A549 (cell line): ENCODE measurements at regions of chr17 and their contacts with region 1.

Region 1: DNA sequence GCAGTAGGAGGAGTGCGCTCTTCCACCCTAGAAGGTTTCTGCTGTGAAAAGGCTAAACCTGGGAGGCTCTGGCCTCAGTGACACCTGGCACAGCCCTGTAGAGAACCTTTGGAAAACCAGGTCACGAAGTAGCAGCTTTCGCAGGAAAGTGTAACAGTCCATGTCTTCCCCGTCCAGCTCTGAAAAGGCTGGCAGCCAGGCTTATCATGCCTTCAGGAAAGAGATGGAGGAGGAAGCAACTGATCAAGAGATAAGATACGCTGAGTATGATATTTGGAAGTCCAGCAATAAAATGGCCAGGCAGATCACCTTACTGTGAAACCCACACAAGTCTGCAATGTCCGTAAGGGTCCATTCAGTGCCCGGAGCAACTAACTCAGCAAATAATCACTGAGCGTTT is 22.3 kb downstream of the TUBD1 start:
- DNase-seq: no peak
- ATAC-seq: no peak
- H3K4me3 ChIP-seq: no peak overlapping the region
- H3K27ac ChIP-seq: no peak overlapping the region
- H3K4me1 ChIP-seq: peaks cover 5% of the 10 kb centered on the region; the same call in 2 of the 3 replicates
- CTCF ChIP-seq: no peak
- EP300 ChIP-seq: no peak
- POLR2A ChIP-seq: no peak
- RAD21 ChIP-seq: no peak

Region 2: DNA sequence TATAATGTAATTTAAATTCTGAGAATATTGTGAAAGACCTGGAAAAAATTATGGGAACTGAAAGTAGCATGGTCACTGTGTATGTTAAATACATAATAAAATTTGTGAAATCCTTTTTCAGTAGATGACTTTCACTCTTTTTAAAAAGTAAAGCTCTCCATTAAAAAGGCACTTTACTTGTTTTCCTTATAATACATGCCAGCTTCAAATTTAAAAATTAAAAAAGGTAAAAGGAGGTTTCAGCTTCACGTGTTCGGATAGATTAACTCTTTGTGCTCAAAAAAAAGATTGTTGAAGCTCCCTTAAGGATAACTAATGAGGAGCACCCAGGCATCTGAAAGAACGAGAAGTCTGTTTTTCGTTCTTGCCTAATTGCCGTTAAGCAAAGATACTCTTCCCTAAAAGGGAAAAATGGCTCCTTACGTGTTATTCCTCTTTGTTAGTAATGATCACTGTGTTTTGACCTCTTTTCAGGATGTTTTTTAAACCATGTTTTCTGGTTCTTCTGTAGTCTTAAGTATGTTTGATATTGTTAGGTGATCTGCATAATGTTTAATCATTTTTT is 65.5 kb before region 1 on chr17:
- CTCF ChIA-PET with region 1: no interaction called
- POLR2A ChIA-PET with region 1: no interaction called
- DNase-seq: peak in 1 of 2 experiments; percentile 89
- ATAC-seq: peak in 1 of 2 experiments; percentile 29; a peak in 3 of 6 replicates
- H3K4me3 ChIP-seq: peak overlapping the region; percentile 4; the same call in 1 of the 3 replicates
- H3K27ac ChIP-seq: peak overlapping the region; percentile 90 to 92
- H3K4me1 ChIP-seq: peaks cover 85% of the 10 kb centered on the region
- CTCF ChIP-seq: no peak
- EP300 ChIP-seq: no peak
- POLR2A ChIP-seq: no peak
- RAD21 ChIP-seq: no peak

Region 3: DNA sequence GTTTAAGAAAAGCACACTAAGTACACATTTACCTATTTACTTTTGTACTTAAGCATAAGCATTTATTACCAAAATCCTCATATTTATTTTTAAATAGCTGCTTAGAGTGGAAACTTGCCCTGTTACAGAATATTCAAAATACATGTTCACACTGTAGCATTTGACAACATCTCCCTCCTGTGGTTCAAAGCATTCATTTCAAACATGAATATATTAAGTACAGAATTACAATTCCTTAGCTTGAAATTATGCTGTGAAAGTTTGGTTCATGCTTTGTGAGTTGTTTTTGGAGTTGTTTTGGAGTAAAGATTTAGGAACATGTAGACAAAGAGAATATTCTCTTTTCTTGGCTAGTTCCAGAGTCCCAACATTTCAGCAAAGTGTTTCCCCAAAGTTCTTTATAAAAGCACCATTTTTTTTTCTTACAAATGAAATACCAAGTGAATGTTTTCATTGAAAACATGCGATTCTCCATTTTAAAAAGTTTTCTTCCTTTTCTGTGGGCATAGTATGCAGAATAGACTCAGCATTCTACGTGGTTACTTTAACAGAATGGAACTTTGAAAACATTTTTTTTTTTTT is 10.9 kb before region 1 on chr17:
- CTCF ChIA-PET with region 1: interaction called, 15 read pairs
- POLR2A ChIA-PET with region 1: no interaction called
- DNase-seq: peak in 1 of 2 experiments; percentile 83
- ATAC-seq: 0 out of 6 replicates have a peak, but pooled peaks of 1 of the 2 experiments have one; percentile 41
- H3K4me3 ChIP-seq: no peak overlapping the region
- H3K27ac ChIP-seq: peak overlapping the region; percentile 91 to 96
- H3K4me1 ChIP-seq: peaks cover 51% of the 10 kb centered on the region
- CTCF ChIP-seq: peak; percentile 90
- EP300 ChIP-seq: no peak
- POLR2A ChIP-seq: no peak
- RAD21 ChIP-seq: peak; percentile 92 to 95

Region 4: GRCh38 chr17:60060474-60060873 is 190.0 kb after region 1 on chr17:
- CTCF ChIA-PET with region 1: no interaction called
- POLR2A ChIA-PET with region 1: no interaction called
- DNase-seq: no peak
- ATAC-seq: no peak
- H3K4me3 ChIP-seq: no peak overlapping the region
- H3K27ac ChIP-seq: no peak overlapping the region
- H3K4me1 ChIP-seq: no peaks in the 10 kb centered on the region
- CTCF ChIP-seq: no peak
- EP300 ChIP-seq: no peak
- POLR2A ChIP-seq: no peak
- RAD21 ChIP-seq: no peak